Activated CD8-positive, alpha-beta T cell treated with anti-CD3 and anti-CD28 coated beads for 36 hours (primary cell): ENCODE measurements at regions of chr16 and their contacts with region 1.

Region 1: DNA sequence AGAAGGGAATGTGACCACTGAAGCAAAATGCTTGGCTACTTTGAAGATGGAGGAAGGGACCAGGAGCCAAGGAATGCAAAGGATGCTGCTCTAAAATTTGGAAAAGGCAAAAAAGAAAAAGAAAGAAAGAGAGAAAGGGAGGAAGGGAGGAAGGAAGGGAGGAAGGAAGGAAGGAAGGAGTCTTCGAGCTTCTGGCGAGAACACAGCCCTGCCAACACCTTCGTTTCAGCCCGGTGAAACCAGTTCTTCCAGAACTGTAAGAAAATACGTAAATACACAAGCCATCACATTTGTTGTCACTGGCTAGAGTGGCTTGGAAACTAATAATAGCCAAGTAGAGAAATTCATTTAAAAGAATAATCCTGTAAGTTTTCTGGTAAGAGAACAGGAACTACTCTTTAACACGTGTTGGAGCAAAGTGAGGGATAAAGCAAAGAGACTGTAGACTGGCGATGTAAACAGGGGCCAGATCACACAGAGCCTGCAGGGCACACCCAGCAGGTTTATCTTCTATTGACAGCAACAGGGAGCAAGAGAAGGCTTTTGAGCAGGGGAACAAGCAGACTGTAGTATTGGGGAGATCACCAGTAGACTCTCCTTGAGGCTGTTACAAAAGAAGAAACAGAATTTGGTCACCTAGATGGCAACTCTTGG is 188.7 kb upstream of the MPHOSPH6 start:
- DNase-seq: no peak
- ATAC-seq: no peak
- H3K4me3 Mint-ChIP-seq: no peak overlapping the region
- H3K27ac Mint-ChIP-seq: no peak overlapping the region
- H3K4me1 Mint-ChIP-seq: no peaks in the 10 kb centered on the region
- H3K27me3 Mint-ChIP-seq: peaks cover 5% of the 10 kb centered on the region
- CTCF ChIP-seq: no peak

Region 2: GRCh38 chr16:82298472-82298871 is 60.2 kb before region 1 on chr16:
- CTCF ChIA-PET with region 1: no interaction called
- POLR2A ChIA-PET with region 1: no interaction called
- intact Hi-C with region 1: loop called (anchors 10 kb)
- DNase-seq: no peak
- ATAC-seq: peak; percentile 49
- H3K4me3 Mint-ChIP-seq: no peak overlapping the region
- H3K27ac Mint-ChIP-seq: no peak overlapping the region
- H3K4me1 Mint-ChIP-seq: no peaks in the 10 kb centered on the region
- H3K27me3 Mint-ChIP-seq: peaks cover 6% of the 10 kb centered on the region
- CTCF ChIP-seq: no peak